ENCODE measurements at regions of chr11 and their contacts with region 1.

Region 1: DNA sequence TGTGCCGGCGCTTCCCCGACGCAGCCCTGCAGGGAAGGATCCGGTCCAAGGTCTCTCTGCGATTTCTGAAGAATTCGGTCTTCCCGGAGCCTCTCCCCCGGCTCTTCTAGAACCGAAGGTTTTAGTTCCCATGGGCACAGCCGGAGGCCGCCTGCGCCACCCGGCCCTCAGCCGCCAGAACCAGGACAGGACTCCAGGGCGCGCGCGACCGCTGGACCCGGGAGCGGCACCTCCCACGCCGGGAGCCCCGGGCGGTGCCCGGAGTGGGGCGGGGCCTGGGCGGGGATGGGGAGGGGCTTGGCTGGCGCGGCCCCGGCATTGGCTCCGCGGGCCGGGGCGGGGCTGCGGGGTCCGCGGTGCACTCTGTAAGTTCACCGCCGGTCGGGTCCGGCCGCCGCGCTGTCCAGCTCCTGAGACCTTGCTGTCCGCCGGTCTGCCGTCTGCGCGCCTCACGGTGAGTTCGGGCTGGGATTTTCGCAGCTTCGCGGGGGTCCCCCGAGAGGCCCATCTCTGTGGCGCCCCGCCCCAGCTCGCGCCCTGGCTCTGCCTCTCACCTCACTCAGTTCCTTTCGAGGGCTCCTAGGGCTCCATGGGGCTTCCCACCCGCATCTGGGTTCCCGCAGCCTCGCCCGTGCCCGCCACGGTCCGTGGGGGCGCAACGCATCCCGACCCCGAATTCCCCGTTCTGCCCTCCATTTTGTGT is at the start of gene CDC42EP2:
- DNase-seq: peak; percentile 70 to 94
- H3K4me3 ChIP-seq: peak within 1 kb of the TSS; percentile 90
- H3K27ac ChIP-seq: peak within 1 kb of the TSS; percentile 54
- H3K4me1 ChIP-seq: peaks cover 66% of the 10 kb centered on the region
- H3K27me3 ChIP-seq: no peaks in the 10 kb centered on the region
- CTCF ChIP-seq: no peak
- total RNA-seq, gene CDC42EP2: 17.8 and 20.8 TPM in 2 replicates

Region 2: GRCh38 chr11:64916775-64917662 is 397.6 kb before region 1 on chr11 and contains the start of gene ATG2A:
- CTCF ChIA-PET with region 1: no interaction called
- POLR2A ChIA-PET with region 1: no interaction called
- intact Hi-C with region 1: no loop called
- DNase-seq: peak; percentile 99
- H3K4me3 ChIP-seq: peak within 1 kb of the TSS; percentile 67
- H3K27ac ChIP-seq: peak within 1 kb of the TSS; percentile 50
- H3K4me1 ChIP-seq: peaks cover 16% of the 10 kb centered on the region
- H3K27me3 ChIP-seq: no peaks in the 10 kb centered on the region
- CTCF ChIP-seq: no peak
- total RNA-seq, gene ATG2A: 48.2 and 53.2 TPM in 2 replicates

Region 3: GRCh38 chr11:65204646-65205601 is 109.7 kb before region 1 on chr11:
- CTCF ChIA-PET with region 1: no interaction called
- POLR2A ChIA-PET with region 1: no interaction called
- intact Hi-C with region 1: loop called (anchors 2 kb)
- DNase-seq: peak in 1 of 2 experiments; percentile 57
- H3K4me3 ChIP-seq: no peak overlapping the region
- H3K27ac ChIP-seq: peak overlapping the region; percentile 72
- H3K4me1 ChIP-seq: peaks cover 70% of the 10 kb centered on the region
- H3K27me3 ChIP-seq: no peaks in the 10 kb centered on the region
- CTCF ChIP-seq: peak; percentile 99

Region 4: DNA sequence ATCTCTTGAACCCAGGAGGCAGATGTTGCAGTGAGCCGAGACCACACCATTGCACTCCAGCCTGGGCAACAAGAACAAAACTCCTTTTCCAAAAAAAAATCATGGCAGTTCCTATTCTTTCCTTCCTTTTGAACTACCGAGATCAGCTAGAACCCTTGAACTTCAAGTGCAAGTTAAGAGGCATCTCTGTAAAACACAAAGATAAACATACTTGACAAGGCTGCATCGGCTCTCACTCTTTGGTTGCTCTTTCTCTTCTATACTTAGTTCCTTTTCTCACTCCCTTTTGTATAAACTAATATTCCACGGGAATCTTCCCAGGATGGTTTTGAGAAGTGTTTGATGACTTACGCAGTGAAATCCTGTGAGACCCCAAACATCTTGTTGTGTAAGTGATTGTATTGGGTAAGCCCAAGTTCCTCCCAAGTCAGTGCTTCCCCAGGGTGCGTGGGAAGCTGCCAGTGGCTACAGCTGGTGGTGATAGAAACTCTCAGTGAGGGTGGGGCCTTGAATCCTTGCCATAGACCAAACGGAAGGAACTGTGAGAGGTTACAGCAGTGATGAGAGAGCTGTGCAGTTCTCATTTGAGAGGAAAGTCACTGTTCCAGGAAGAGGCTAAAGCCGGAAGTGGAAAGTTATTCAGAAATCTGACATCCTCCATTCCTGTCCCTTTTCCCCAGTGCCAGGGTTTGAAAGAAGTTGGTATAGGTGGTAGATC is 24.0 kb before region 1 on chr11:
- CTCF ChIA-PET with region 1: interaction called, 8 read pairs
- POLR2A ChIA-PET with region 1: interaction called, 7 read pairs
- intact Hi-C with region 1: loop called (anchors 1 kb)
- DNase-seq: peak; percentile 32 to 52
- H3K4me3 ChIP-seq: no peak overlapping the region
- H3K27ac ChIP-seq: peak overlapping the region; percentile 92
- H3K4me1 ChIP-seq: peaks cover 34% of the 10 kb centered on the region
- H3K27me3 ChIP-seq: no peaks in the 10 kb centered on the region
- CTCF ChIP-seq: no peak

Region 5: DNA sequence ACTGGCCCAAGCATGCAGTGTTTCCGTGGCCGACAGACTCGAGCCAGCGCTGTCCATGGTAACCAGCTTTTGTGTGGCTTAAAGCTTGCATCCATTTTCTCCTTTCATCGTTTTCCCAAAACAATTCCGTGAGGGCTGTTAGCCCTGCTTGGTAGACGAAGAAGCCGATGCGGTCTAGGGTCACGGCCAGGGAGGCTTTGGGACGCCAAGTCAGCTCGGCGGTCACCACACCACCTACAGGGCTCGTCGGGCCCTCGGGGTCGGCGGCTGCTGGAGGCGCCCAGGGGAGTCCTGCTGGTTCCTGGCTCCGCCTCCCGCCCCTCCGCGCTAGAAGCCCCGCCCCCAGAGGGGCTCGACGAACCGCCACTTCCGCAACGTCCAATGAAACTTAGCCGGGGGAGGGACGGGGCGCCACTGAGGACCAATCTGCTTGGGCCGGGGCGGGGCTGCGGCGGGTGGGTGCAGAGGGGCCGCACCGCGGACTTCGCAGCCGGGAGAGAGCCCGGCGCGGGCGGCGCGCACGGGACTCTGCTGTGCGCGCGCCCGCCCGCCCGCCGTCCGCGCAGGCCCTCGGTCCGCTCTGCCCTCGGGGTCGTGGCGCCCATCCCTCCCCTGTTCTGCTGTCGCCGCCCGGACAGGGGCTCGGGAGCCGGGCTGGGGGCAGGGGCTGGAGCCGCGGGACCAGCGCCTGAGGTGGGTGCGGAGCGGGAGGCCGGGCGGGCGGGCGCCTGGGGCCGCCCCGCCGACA is 39.8 kb after region 1 on chr11 and contains the start of gene TIGD3:
- CTCF ChIA-PET with region 1: interaction called, 3 read pairs
- POLR2A ChIA-PET with region 1: no interaction called
- intact Hi-C with region 1: loop called (anchors 2 kb)
- DNase-seq: peak; percentile 88 to 99
- H3K4me3 ChIP-seq: peak within 1 kb of the TSS; percentile 87
- H3K27ac ChIP-seq: no peak within 1 kb of the TSS
- H3K4me1 ChIP-seq: peaks cover 11% of the 10 kb centered on the region
- H3K27me3 ChIP-seq: no peaks in the 10 kb centered on the region
- CTCF ChIP-seq: no peak
- total RNA-seq, gene TIGD3: 1.7 and 1.8 TPM in 2 replicates

Region 6: DNA sequence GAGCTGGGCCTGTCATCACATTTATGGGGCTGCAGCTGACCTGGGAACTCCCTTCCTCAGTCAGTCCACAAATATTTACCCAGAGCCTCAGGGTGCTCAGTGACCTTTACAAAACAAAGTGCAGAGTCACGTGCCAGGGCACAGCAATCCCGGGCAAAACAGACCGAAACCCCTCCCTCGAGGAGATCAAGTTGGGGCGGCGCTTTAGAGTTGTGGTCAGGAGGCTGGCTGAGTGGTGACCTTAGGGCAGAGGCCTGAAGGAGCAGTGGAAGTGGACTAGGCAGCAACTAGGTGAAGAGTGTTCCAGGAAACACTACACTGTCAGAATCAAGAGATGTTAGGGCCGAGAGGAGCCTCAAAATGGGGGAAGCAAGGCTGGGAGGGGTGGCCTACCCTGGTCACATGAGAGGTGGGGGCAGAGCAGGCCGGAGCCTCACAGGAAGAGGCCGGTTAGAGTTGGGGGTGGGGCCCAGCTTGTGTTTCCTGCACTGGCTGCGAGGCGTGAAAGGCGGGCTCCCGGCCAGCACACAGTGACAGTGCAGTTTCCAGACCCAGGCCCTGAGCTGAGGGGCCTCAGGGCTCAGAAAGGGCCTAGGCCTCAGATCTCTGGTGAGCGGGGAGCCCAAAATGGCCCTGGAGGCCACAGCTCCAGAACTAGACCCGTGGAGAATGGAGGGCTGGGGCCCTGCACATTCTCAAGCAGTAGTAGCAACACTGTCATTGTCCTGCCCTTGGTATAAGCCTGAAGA is 104.2 kb after region 1 on chr11:
- CTCF ChIA-PET with region 1: no interaction called
- POLR2A ChIA-PET with region 1: no interaction called
- intact Hi-C with region 1: no loop called
- DNase-seq: peak; percentile 98 to 99
- H3K4me3 ChIP-seq: peak overlapping the region; percentile 59
- H3K27ac ChIP-seq: peak overlapping the region; percentile 100
- H3K4me1 ChIP-seq: peaks cover 57% of the 10 kb centered on the region
- H3K27me3 ChIP-seq: no peaks in the 10 kb centered on the region
- CTCF ChIP-seq: no peak

Region 7: DNA sequence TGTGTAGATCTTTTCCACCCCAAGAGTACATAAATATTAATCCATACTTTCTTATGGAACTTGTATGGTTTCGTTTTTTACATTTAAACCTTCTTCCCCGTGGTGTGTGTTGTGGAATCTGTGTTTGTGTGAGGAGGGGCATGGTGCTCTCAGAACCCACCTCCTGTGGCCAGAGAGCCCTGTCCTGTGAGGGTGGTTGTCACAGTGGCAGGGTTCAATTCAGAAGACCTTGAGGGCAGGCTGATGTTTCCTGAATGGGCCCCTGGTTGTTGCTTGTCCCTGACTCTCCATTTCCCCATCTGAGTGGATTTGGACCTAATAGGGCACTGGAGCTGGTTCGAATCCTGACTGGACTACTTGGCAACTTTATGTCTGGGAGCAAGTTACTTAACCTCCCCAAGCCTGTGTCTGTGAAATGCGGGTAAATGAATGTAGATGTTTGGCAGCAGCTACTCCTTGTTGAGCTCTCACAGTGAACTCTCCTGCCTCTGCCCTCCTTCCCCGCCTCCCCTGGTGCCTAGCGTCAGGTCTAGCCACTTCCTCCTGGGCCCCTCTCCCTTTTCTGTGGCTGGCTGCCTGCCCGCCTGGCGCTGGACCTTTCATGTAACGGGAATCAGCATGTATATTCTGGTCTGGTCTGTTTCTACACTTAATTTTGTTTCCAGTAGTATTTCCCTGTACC is 115.2 kb after region 1 on chr11:
- CTCF ChIA-PET with region 1: no interaction called
- POLR2A ChIA-PET with region 1: interaction called, 11 read pairs
- intact Hi-C with region 1: no loop called
- DNase-seq: peak in 1 of 2 experiments; percentile 56
- H3K4me3 ChIP-seq: no peak overlapping the region
- H3K27ac ChIP-seq: peak overlapping the region; percentile 100
- H3K4me1 ChIP-seq: peaks cover 54% of the 10 kb centered on the region
- H3K27me3 ChIP-seq: no peaks in the 10 kb centered on the region
- CTCF ChIP-seq: no peak